Activated CD4-positive, alpha-beta T cell treated with anti-CD3 and anti-CD28 coated beads for 36 hours (primary cell): ENCODE measurements at regions of chr1 and their contacts with region 1.

Region 1: GRCh38 chr1:28877132-28877781 is 37.1 kb upstream of the EPB41 start:
- DNase-seq: peak; percentile 86
- ATAC-seq: peak; percentile 70
- H3K4me3 Mint-ChIP-seq: no peak overlapping the region
- H3K27ac Mint-ChIP-seq: no peak overlapping the region
- H3K4me1 Mint-ChIP-seq: peaks cover 10% of the 10 kb centered on the region
- H3K27me3 Mint-ChIP-seq: no peaks in the 10 kb centered on the region

Region 2: GRCh38 chr1:28409090-28409489 is 468.2 kb before region 1 on chr1:
- CTCF ChIA-PET with region 1: interaction called, 3 read pairs
- POLR2A ChIA-PET with region 1: no interaction called
- intact Hi-C with region 1: loop called in 1 of 2 experiments (anchors 1 kb)
- DNase-seq: no peak
- ATAC-seq: no peak
- H3K4me3 Mint-ChIP-seq: no peak overlapping the region
- H3K27ac Mint-ChIP-seq: no peak overlapping the region
- H3K4me1 Mint-ChIP-seq: peaks cover 2% of the 10 kb centered on the region
- H3K27me3 Mint-ChIP-seq: no peaks in the 10 kb centered on the region

Region 3: DNA sequence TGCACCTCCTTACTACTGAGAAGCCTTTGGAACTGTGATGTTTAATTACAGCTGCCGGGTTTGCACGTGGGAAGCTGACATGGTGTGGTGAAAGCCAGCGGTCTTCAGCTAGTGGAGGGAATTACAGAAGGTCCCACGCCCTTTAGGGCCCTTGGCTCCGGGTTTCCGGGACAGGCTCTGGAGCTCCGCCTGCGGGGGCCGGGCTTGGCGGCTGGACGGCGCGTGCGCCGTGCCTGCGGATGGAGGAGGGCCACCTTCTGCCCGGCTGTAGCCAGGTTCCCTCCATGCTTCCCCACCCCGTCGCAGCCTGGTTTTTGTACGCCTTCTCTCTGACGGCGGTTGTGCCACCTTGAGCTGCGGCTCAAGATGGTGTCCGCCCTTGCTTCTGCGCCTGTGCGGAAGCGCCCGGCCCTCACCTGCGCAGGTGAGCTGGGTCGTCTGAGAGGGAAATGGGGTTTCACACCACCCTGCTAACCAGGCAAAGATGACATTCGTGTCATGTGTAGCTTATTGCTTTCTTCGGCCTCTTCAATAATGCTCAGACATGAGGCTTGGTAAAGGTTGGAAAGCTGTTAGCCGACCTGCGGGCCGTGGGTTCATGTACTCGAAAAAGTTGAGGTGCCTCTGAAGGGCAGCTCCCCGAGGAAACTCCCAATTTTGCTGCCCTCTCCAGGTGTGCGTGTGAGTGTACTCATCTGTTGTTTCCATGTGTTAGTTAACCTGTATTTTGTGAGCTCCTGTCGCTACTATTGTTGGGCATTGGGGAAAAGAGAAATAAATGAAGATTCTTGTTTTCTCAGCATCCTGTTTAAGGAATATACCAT is 101.9 kb before region 1 on chr1:
- CTCF ChIA-PET with region 1: interaction called, 30 read pairs
- POLR2A ChIA-PET with region 1: interaction called, 3 read pairs
- intact Hi-C with region 1: no loop called
- DNase-seq: peak; percentile 76
- ATAC-seq: peak; percentile 89
- H3K4me3 Mint-ChIP-seq: peak overlapping the region; percentile 44
- H3K27ac Mint-ChIP-seq: peak overlapping the region; percentile 6
- H3K4me1 Mint-ChIP-seq: peaks cover 8% of the 10 kb centered on the region
- H3K27me3 Mint-ChIP-seq: no peaks in the 10 kb centered on the region

Region 4: DNA sequence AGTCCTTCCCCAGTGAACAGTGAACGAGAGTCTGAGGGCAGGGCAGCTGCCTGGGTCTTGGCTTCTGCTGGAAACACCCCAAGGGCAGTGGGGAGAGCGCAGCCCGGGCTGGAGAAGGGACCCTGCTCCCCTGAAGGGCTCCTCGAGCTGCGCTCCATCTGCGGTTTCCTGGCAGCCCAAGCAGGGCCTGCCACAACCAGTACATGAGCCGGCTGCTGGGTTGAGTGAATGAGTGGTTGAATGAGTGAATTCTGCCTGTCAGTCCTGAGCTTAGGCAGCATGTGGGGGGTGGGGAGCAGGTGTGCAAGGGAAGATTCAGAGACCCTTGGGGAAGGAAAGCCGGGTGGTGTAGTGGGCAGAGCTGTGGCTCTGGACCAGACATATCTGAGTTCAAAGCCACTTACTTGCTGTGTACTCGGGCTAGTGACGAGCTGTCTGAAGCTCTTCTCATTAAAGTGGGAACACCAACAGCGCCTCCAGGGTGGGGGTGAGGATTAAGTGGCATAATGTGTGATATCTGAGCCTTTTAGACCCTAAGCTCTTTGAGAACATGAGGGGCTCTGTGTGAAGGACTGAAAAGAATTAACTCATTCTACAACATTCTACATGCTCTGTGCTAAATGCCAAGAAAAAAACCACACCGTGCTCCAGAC is 61.6 kb before region 1 on chr1:
- CTCF ChIA-PET with region 1: interaction called, 12 read pairs
- POLR2A ChIA-PET with region 1: no interaction called
- intact Hi-C with region 1: no loop called
- DNase-seq: no peak
- ATAC-seq: peak; percentile 33
- H3K4me3 Mint-ChIP-seq: no peak overlapping the region
- H3K27ac Mint-ChIP-seq: no peak overlapping the region
- H3K4me1 Mint-ChIP-seq: peaks cover 3% of the 10 kb centered on the region
- H3K27me3 Mint-ChIP-seq: peaks cover 40% of the 10 kb centered on the region

Region 5: DNA sequence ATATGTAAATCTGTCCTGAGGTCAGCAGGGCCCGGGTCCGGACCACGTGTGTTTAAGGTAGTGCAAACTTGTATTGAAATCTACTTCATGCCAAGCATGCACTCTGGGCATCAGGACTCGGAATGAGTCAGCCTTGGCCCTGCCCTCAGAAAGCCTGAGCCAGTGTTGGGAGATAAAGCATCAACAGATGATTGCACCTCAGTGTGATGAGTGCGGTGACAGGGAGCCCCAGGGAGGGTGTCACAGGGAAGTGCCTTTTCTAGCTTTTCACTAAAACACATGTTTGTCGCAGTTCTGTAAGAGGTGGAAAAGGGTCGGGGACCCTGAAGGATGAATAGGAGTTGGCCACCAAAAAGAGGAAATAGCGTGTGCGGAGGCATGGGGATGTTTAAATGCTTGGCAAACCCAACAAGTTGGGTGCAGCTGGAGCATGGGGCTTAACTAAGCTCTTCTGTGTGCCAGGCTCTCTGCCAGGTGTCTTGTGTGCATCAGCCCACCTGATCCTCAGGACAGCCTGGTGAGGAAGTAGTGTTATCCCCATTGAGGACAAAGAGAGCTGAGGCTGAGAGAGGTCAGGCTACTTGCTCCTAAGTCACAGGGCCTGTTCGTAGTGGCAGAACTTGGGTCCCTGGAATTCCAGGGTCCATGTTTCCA is 11.1 kb before region 1 on chr1:
- CTCF ChIA-PET with region 1: interaction called, 11 read pairs
- POLR2A ChIA-PET with region 1: no interaction called
- intact Hi-C with region 1: no loop called
- DNase-seq: no peak
- ATAC-seq: no peak
- H3K4me3 Mint-ChIP-seq: no peak overlapping the region
- H3K27ac Mint-ChIP-seq: no peak overlapping the region
- H3K4me1 Mint-ChIP-seq: no peaks in the 10 kb centered on the region
- H3K27me3 Mint-ChIP-seq: peaks cover 3% of the 10 kb centered on the region

Region 6: GRCh38 chr1:29043274-29043965 is 166.2 kb after region 1 on chr1:
- CTCF ChIA-PET with region 1: interaction called, 19 read pairs
- POLR2A ChIA-PET with region 1: no interaction called
- intact Hi-C with region 1: no loop called
- DNase-seq: no peak
- ATAC-seq: no peak
- H3K4me3 Mint-ChIP-seq: no peak overlapping the region
- H3K27ac Mint-ChIP-seq: peak overlapping the region; percentile 70
- H3K4me1 Mint-ChIP-seq: peaks cover 40% of the 10 kb centered on the region
- H3K27me3 Mint-ChIP-seq: no peaks in the 10 kb centered on the region

Region 7: DNA sequence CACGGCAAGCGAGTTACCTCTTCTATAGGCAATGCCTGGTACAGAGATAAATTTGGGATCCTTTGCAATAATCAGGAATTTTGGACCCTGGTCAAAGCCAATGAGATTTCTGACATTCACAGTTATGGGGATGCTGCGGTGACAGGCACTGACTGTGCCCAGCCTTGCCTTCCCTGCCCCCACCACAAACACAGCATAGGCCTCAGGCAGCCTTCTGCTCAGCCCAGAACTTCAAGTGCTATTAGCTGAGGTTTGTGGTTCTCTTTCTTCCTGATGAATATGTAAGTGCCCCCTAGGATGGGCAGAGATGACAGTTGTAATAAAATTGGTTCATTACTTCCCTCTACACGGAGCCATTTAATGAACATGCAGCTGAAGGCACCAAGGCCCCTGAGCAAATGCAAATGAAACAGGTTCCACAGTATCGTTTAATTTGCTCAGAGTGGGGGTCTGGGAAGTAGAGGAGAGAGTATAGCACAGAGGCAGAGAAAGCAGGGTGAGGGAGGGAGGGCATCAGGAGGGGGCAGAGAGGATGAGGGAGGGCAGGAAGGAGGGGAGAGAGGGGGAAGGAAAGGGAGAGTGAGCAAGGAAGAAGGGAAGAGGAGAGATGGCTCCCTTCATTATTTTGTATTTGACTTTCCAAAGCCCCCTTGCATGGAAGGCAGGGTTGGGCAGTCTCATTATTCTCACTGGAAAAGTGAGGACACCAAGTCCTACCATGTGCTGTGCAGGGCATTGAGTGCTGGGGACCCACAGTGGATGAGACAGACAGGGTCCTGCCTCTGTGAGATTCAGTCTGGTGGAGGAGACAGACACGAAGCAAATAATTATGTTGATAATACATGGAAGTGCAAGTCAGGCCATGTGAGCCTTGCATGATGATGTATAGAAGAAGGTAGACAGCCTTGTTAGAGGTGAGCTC is 872.0 kb after region 1 on chr1:
- CTCF ChIA-PET with region 1: no interaction called
- POLR2A ChIA-PET with region 1: no interaction called
- intact Hi-C with region 1: no loop called
- DNase-seq: no peak
- ATAC-seq: no peak
- H3K4me3 Mint-ChIP-seq: no peak overlapping the region
- H3K27ac Mint-ChIP-seq: no peak overlapping the region
- H3K4me1 Mint-ChIP-seq: no peaks in the 10 kb centered on the region
- H3K27me3 Mint-ChIP-seq: peaks cover 8% of the 10 kb centered on the region